ENCODE measurements at regions of chr10 and their contacts with region 1.

Region 1: GRCh38 chr10:124418726-124419501 is at the start of gene OAT:
- DNase-seq: peak; percentile 90 to 96 (median 94)
- ATAC-seq: peak; percentile 99
- H3K4me3 ChIP-seq: peak within 1 kb of the TSS; percentile 76
- H3K4me3 Mint-ChIP-seq: peak within 1 kb of the TSS; percentile 80 to 91 (median 84)
- H3K27ac ChIP-seq: peak within 1 kb of the TSS; percentile 80
- H3K27ac Mint-ChIP-seq: peak within 1 kb of the TSS in 8 of 9 donors; percentile 31 to 90 (median 83)
- H3K4me1 ChIP-seq: peaks cover 8 to 10% of the 10 kb centered on the region in 2 donors
- H3K4me1 Mint-ChIP-seq: peaks cover 8 to 41% (median 31%) of the 10 kb centered on the region in 7 donors
- H3K27me3 ChIP-seq: no peaks in the 10 kb centered on the region
- H3K27me3 Mint-ChIP-seq: peaks cover 0 to 18% (median 2%) of the 10 kb centered on the region in 5 donors
- total RNA-seq, gene OAT: 29.6 to 47.0 (median 39.1) TPM

Region 2: GRCh38 chr10:122879339-122880273 is 1539.3 kb before region 1 on chr10 and contains the start of gene FAM24B:
- CTCF ChIA-PET with region 1: no interaction called
- POLR2A ChIA-PET with region 1: no interaction called
- intact Hi-C with region 1: loop called in 1 of 2 experiments (anchors 2 kb)
- DNase-seq: peak; percentile 84 to 96 (median 94)
- ATAC-seq: peak; percentile 93
- H3K4me3 ChIP-seq: peak within 1 kb of the TSS; percentile 81
- H3K4me3 Mint-ChIP-seq: peak within 1 kb of the TSS; percentile 86 to 99 (median 92)
- H3K27ac ChIP-seq: peak within 1 kb of the TSS; percentile 77
- H3K27ac Mint-ChIP-seq: peak within 1 kb of the TSS; percentile 85 to 96 (median 92)
- H3K4me1 ChIP-seq: peaks cover 18 to 21% of the 10 kb centered on the region in 2 donors
- H3K4me1 Mint-ChIP-seq: peaks cover 31 to 65% (median 54%) of the 10 kb centered on the region in 7 donors
- H3K27me3 ChIP-seq: no peaks in the 10 kb centered on the region
- H3K27me3 Mint-ChIP-seq: no peaks in the 10 kb centered on the region
- total RNA-seq, gene FAM24B: 9.9 to 13.5 (median 11.4) TPM

Region 3: GRCh38 chr10:124323111-124323886 is 95.6 kb before region 1 on chr10:
- CTCF ChIA-PET with region 1: no interaction called
- POLR2A ChIA-PET with region 1: no interaction called
- intact Hi-C with region 1: no loop called
- DNase-seq: no peak
- ATAC-seq: no peak
- H3K4me3 ChIP-seq: no peak overlapping the region
- H3K4me3 Mint-ChIP-seq: peak overlapping the region in 1 of 10 donors; percentile 51
- H3K27ac ChIP-seq: no peak overlapping the region
- H3K27ac Mint-ChIP-seq: no peak overlapping the region
- H3K4me1 ChIP-seq: no peaks in the 10 kb centered on the region
- H3K4me1 Mint-ChIP-seq: peaks cover 0 to 6% (median 0%) of the 10 kb centered on the region in 7 donors
- H3K27me3 ChIP-seq: no peaks in the 10 kb centered on the region
- H3K27me3 Mint-ChIP-seq: peaks cover 0 to 7% (median 0%) of the 10 kb centered on the region in 5 donors

Region 4: DNA sequence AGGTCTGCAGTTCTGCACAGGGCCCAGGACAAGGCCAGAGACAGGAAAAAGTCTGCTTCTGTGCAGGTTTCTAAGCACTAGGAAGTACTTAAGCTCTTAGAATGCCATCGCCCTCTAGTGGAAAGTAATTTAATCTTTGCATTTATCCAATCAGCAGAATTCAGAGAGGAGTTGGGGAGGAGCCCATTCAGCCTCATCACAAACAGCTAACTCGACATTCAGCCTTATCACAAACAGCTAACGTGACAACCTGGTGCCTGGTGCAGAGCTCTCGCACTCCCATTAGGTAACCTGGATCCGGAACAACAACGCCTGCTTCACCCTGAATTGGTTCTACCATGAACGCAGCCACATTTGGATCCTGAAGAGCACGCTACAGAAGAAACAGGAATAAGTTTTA is 15.4 kb before region 1 on chr10:
- CTCF ChIA-PET with region 1: interaction called, 3 read pairs
- POLR2A ChIA-PET with region 1: interaction called, 4 read pairs
- intact Hi-C with region 1: loop called (anchors 1 kb)
- DNase-seq: peak in 7 of 9 donors; percentile 49 to 74 (median 67)
- ATAC-seq: peak; percentile 100
- H3K4me3 ChIP-seq: no peak overlapping the region
- H3K4me3 Mint-ChIP-seq: peak overlapping the region in 1 of 10 donors; percentile 38
- H3K27ac ChIP-seq: no peak overlapping the region
- H3K27ac Mint-ChIP-seq: peak overlapping the region; percentile 28 to 95 (median 75)
- H3K4me1 ChIP-seq: peaks cover 0 to 10% of the 10 kb centered on the region in 2 donors
- H3K4me1 Mint-ChIP-seq: peaks cover 8 to 11% (median 10%) of the 10 kb centered on the region in 7 donors
- H3K27me3 ChIP-seq: no peaks in the 10 kb centered on the region
- H3K27me3 Mint-ChIP-seq: no peaks in the 10 kb centered on the region

Region 5: DNA sequence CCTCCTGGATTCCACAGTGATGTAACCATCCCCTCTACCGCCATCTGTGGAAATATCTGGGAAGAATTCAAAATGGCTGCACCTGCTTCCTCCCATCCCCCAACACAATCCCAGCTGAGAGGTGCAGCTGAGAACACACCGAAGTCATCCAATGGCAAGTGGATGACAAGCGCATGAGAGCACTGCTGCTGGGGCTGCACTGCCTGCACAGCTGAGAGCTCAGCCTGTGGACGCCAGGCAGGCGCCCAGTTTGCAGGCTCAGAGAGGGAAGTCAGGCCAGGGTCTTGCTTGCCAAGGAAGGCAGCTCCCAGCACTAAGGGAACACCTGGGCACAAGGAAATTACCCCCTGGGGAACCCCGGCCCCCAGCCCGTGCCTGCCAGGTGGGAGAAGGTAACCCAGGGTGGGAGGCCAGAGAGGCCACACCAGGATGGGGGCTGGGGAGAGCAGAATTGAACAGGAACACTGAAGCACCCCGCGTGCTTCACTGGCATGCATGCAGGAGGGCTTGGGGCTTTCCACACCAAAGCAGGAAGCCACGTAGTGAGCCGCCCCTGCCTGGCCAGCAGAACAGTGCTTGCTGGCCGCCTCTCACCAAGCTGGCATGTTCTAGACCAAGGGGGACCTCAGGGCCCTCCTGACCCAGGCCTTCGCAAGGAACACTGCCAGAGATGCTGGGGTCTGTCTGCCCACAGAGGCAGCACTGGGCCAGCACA is 279.1 kb after region 1 on chr10:
- CTCF ChIA-PET with region 1: no interaction called
- POLR2A ChIA-PET with region 1: no interaction called
- intact Hi-C with region 1: no loop called
- DNase-seq: peak in 4 of 9 donors; percentile 12 to 50 (median 41)
- ATAC-seq: peak; percentile 68
- H3K4me3 ChIP-seq: no peak overlapping the region
- H3K4me3 Mint-ChIP-seq: peak overlapping the region in 9 of 10 donors; percentile 53 to 82 (median 73)
- H3K27ac ChIP-seq: peak overlapping the region; percentile 67
- H3K27ac Mint-ChIP-seq: peak overlapping the region; percentile 84 to 97 (median 91)
- H3K4me1 ChIP-seq: peaks cover 66 to 90% of the 10 kb centered on the region in 2 donors
- H3K4me1 Mint-ChIP-seq: peaks cover 73 to 96% (median 94%) of the 10 kb centered on the region in 7 donors
- H3K27me3 ChIP-seq: no peaks in the 10 kb centered on the region
- H3K27me3 Mint-ChIP-seq: no peaks in the 10 kb centered on the region

Region 6: DNA sequence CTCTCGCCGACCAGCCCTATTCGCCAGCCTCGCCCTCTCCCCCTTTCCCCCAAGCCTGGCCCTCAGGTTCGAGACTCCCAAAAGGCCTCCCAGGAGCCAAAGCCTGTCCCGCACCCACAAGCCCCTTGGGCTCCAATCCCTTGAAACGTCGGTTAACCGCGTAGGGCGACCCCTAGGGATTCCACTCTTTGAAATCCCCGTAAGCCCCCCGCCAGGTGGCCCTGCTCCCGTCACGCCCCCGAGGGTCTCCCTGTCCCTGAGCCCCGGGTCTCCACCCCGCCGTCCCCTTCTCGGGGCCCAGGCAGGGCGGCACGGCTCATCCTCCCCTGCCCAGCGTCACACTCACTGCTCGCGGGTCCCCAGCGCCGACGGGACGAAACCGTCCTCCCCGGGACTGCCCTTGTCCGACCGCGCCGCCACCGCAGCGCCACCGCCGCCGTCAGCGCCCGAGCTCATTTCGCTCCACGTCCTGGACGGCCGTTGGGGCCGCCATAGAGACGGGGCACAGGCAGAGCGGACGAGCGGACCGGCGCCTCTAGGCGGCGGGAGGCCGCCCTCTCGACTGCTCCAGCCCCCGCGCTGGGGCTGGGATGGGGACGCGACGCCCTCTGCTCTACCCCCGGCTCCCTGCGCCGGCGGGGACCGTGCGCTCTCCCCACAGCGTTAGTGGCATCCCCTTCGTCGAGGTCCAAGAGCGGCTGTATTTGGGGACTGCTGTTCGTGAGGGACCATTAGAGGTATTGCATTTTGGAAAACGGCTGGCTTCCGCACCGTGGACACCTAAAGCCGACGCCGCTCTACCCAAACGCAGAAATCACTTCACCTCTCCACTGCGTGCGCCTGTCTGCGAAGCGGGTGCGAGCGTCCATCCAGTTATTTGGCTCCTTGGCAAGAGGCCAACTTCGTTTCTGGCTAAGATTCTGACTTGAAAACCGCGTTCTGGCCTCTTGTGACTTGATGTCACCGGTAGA is 372.7 kb after region 1 on chr10 and contains the start of gene EEF1AKMT2:
- CTCF ChIA-PET with region 1: no interaction called
- POLR2A ChIA-PET with region 1: no interaction called
- intact Hi-C with region 1: loop called in 1 of 2 experiments (anchors 5 kb)
- DNase-seq: peak; percentile 68 to 88 (median 81)
- ATAC-seq: peak; percentile 99
- H3K4me3 ChIP-seq: peak within 1 kb of the TSS; percentile 92
- H3K4me3 Mint-ChIP-seq: peak within 1 kb of the TSS; percentile 90 to 100 (median 98)
- H3K27ac ChIP-seq: peak within 1 kb of the TSS; percentile 77
- H3K27ac Mint-ChIP-seq: peak within 1 kb of the TSS; percentile 89 to 96 (median 95)
- H3K4me1 ChIP-seq: peaks cover 5 to 9% of the 10 kb centered on the region in 2 donors
- H3K4me1 Mint-ChIP-seq: peaks cover 11 to 30% (median 21%) of the 10 kb centered on the region in 7 donors
- H3K27me3 ChIP-seq: no peaks in the 10 kb centered on the region
- H3K27me3 Mint-ChIP-seq: peaks cover 0 to 7% (median 0%) of the 10 kb centered on the region in 5 donors
- total RNA-seq, gene EEF1AKMT2: 11.5 to 23.0 (median 21.0) TPM

Region 7: DNA sequence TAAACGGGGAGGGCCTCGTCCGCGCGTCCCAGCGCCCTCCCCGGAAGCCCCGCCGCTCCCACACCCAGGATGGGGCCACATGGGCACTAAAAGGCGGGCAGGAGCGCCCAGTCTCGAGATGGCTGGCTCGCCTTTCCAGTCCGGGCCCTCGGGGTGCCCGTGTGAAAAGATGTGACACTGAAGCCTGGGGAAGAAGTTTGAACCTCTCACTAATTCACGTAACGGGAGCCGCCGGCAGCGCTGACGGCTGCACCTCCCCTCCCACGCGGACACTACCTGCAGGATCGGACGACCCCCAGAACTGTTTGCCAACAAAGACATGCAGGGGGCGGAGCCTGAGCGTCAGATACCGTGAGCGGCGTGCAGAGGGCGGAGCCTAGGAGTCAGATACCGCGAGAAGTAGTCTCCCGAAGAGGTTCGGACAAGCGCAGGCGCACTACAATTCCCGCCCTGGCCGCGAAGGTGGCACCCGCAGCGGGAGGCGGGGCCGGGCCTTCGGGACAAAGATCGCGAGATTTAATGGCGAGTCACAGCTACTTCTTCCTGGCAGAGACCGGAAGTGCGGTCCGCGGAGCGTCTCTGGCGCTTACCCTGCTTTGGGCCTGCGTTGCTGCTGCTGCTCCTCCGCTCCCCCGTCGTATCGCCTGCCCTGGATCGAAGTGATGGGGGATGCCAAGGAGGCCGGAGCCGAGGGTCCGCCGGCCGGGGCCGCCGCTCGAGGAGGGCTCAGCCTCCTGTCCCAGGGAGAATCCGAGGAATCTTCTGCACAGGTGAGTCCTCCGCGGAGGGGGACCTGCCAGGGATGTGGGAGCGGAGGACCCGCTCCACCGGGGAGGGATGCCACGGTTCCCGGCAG is 1300.5 kb after region 1 on chr10 and contains the start of gene EDRF1:
- CTCF ChIA-PET with region 1: no interaction called
- POLR2A ChIA-PET with region 1: no interaction called
- intact Hi-C with region 1: loop called in 1 of 2 experiments (anchors 1 kb)
- DNase-seq: peak; percentile 96 to 100 (median 99)
- ATAC-seq: peak; percentile 97
- H3K4me3 ChIP-seq: peak within 1 kb of the TSS; percentile 95
- H3K4me3 Mint-ChIP-seq: peak within 1 kb of the TSS; percentile 89 to 99 (median 98)
- H3K27ac ChIP-seq: peak within 1 kb of the TSS; percentile 94
- H3K27ac Mint-ChIP-seq: peak within 1 kb of the TSS; percentile 96 to 99 (median 97)
- H3K4me1 ChIP-seq: peaks cover 20 to 24% of the 10 kb centered on the region in 2 donors
- H3K4me1 Mint-ChIP-seq: peaks cover 6 to 47% (median 39%) of the 10 kb centered on the region in 7 donors
- H3K27me3 ChIP-seq: no peaks in the 10 kb centered on the region
- H3K27me3 Mint-ChIP-seq: peaks cover 0 to 3% (median 0%) of the 10 kb centered on the region in 5 donors
- total RNA-seq, gene EDRF1: 33.8 to 64.4 (median 53.8) TPM

Measured in naive thymus-derived CD4-positive, alpha-beta T cell (primary cell).